SK-N-SH (cell line): ENCODE measurements at regions of chr19 and their contacts with region 1.

Region 1: GRCh38 chr19:43754503-43755255 is at the start of gene SMG9:
- DNase-seq: peak; percentile 97
- H3K4me3 ChIP-seq: peak within 1 kb of the TSS; percentile 74 to 87
- H3K27ac ChIP-seq: peak within 1 kb of the TSS; percentile 98 to 100
- H3K4me1 ChIP-seq: peaks cover 7 to 50% of the 10 kb centered on the region in 2 experiments; a peak in 3 of 4 replicates
- H3K27me3 ChIP-seq: no peaks in the 10 kb centered on the region
- CTCF ChIP-seq: no peak
- EP300 ChIP-seq: no peak
- RAD21 ChIP-seq: no peak
- polyA plus RNA-seq, gene SMG9: 17.3 and 24.3 TPM in 2 replicates

Region 2: GRCh38 chr19:43765109-43765876 is 10.6 kb after region 1 on chr19:
- CTCF ChIA-PET with region 1: interaction called, 22 read pairs
- POLR2A ChIA-PET with region 1: interaction called, 3 read pairs
- DNase-seq: no peak
- H3K4me3 ChIP-seq: no peak overlapping the region
- H3K27ac ChIP-seq: peak overlapping the region; percentile 11 to 94; a peak in 3 of 4 replicates
- H3K4me1 ChIP-seq: peaks cover 0 to 21% of the 10 kb centered on the region in 2 experiments; a peak in 3 of 4 replicates
- H3K27me3 ChIP-seq: no peaks in the 10 kb centered on the region
- CTCF ChIP-seq: no peak
- EP300 ChIP-seq: peak in 1 of 2 experiments; percentile 81; a peak in 1 of 4 replicates
- RAD21 ChIP-seq: no peak

Region 3: GRCh38 chr19:43774103-43774939 is 19.6 kb after region 1 on chr19:
- CTCF ChIA-PET with region 1: interaction called, 10 read pairs
- POLR2A ChIA-PET with region 1: interaction called, 5 read pairs
- DNase-seq: peak; percentile 87
- H3K4me3 ChIP-seq: no peak overlapping the region
- H3K27ac ChIP-seq: no peak overlapping the region
- H3K4me1 ChIP-seq: peaks cover 11 to 19% of the 10 kb centered on the region in 2 experiments; a peak in 3 of 4 replicates
- H3K27me3 ChIP-seq: no peaks in the 10 kb centered on the region
- CTCF ChIP-seq: 0 out of 2 replicates have a peak, but pooled peaks have one; percentile 16
- EP300 ChIP-seq: no peak
- RAD21 ChIP-seq: no peak